ENCODE measurements at regions of chr2 and their contacts with region 1.

Region 1: GRCh38 chr2:209977386-209978239 is 24.8 kb upstream of the RPE start:
- DNase-seq: peak; percentile 21 to 56 (median 34)
- H3K4me3 ChIP-seq: no peak overlapping the region
- H3K4me3 Mint-ChIP-seq: no peak overlapping the region
- H3K27ac ChIP-seq: no peak overlapping the region
- H3K27ac Mint-ChIP-seq: no peak overlapping the region
- H3K4me1 ChIP-seq: no peaks in the 10 kb centered on the region
- H3K4me1 Mint-ChIP-seq: no peaks in the 10 kb centered on the region
- H3K27me3 ChIP-seq: no peaks in the 10 kb centered on the region
- H3K27me3 Mint-ChIP-seq: peaks cover 0 to 6% (median 3%) of the 10 kb centered on the region in 3 donors
- CTCF ChIP-seq: peak; percentile 80

Region 2: GRCh38 chr2:209817844-209818271 is 159.8 kb before region 1 on chr2:
- intact Hi-C with region 1: no loop called
- DNase-seq: no peak
- H3K4me3 ChIP-seq: no peak overlapping the region
- H3K4me3 Mint-ChIP-seq: no peak overlapping the region
- H3K27ac ChIP-seq: no peak overlapping the region
- H3K27ac Mint-ChIP-seq: no peak overlapping the region
- H3K4me1 ChIP-seq: no peaks in the 10 kb centered on the region
- H3K4me1 Mint-ChIP-seq: peaks cover 4% of the 10 kb centered on the region
- H3K27me3 ChIP-seq: no peaks in the 10 kb centered on the region
- H3K27me3 Mint-ChIP-seq: no peaks in the 10 kb centered on the region
- CTCF ChIP-seq: no peak

Region 3: DNA sequence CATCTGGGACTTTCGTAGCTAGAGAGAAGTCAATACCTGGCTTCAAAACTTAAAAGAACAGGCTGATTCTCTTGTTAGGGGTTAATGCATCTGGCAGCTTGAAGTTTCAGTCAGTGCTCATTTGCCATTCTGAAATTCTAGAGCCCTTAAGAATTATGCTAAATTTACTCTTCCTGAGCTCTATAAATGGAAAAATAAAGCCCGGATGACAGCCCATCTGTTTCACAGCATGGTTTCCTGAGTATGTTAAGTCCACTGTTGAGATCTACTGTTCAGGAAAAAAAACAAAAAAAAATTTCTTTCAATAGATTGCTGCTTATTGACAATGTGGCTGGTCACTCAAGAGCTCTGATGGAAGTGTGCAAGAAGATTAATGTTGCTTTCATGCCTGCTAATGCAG is 76.4 kb before region 1 on chr2:
- intact Hi-C with region 1: no loop called
- DNase-seq: no peak
- H3K4me3 ChIP-seq: no peak overlapping the region
- H3K4me3 Mint-ChIP-seq: no peak overlapping the region
- H3K27ac ChIP-seq: no peak overlapping the region
- H3K27ac Mint-ChIP-seq: no peak overlapping the region
- H3K4me1 ChIP-seq: no peaks in the 10 kb centered on the region
- H3K4me1 Mint-ChIP-seq: no peaks in the 10 kb centered on the region
- H3K27me3 ChIP-seq: no peaks in the 10 kb centered on the region
- H3K27me3 Mint-ChIP-seq: no peaks in the 10 kb centered on the region
- CTCF ChIP-seq: no peak

Region 4: DNA sequence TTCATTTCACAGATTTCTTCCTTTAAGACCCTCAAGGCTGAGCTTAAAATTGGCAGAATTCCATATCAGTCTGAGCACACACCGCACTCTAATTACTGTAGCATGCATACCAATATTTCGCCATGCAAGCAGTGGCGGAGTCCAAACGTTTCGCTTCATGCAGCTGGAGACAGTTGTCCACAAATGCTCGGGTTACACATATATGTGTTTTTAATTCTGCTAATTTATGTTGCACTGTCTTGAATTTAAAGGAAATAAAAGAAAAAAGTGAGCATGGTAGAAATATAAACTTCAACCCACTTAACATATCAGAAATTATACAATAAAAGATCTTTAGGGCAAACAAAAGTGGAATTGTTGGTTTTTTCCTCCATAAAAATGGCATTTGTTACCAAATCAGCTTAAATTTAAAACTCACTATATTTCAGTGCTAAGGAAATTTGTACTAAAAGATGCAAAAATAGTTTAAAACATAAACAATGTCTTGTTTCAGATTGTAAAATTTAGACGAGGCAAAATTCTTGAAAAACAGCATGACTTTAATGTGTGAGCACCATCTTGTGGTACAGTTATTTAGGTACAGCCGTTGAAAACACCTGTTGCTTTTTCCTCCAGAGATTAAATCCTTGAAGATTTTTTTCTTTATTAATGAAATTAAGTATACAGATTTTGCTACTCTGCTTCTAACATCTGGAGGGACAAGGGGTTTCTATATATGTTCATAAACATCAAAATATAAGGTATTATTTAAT is 217.7 kb after region 1 on chr2:
- intact Hi-C with region 1: loop called (anchors 2 to 5 kb)
- DNase-seq: peak; percentile 17 to 57 (median 47)
- H3K4me3 ChIP-seq: peak overlapping the region in 2 of 3 experiments; percentile 2 to 37
- H3K4me3 Mint-ChIP-seq: peak overlapping the region in 1 of 2 donors; percentile 54
- H3K27ac ChIP-seq: no peak overlapping the region
- H3K27ac Mint-ChIP-seq: no peak overlapping the region
- H3K4me1 ChIP-seq: no peaks in the 10 kb centered on the region
- H3K4me1 Mint-ChIP-seq: peaks cover 4% of the 10 kb centered on the region
- H3K27me3 ChIP-seq: no peaks in the 10 kb centered on the region
- H3K27me3 Mint-ChIP-seq: peaks cover 0 to 2% (median 0%) of the 10 kb centered on the region in 3 donors
- CTCF ChIP-seq: peak; percentile 76